ENCODE measurements at regions of chr2 and their contacts with region 1.

Region 1: DNA sequence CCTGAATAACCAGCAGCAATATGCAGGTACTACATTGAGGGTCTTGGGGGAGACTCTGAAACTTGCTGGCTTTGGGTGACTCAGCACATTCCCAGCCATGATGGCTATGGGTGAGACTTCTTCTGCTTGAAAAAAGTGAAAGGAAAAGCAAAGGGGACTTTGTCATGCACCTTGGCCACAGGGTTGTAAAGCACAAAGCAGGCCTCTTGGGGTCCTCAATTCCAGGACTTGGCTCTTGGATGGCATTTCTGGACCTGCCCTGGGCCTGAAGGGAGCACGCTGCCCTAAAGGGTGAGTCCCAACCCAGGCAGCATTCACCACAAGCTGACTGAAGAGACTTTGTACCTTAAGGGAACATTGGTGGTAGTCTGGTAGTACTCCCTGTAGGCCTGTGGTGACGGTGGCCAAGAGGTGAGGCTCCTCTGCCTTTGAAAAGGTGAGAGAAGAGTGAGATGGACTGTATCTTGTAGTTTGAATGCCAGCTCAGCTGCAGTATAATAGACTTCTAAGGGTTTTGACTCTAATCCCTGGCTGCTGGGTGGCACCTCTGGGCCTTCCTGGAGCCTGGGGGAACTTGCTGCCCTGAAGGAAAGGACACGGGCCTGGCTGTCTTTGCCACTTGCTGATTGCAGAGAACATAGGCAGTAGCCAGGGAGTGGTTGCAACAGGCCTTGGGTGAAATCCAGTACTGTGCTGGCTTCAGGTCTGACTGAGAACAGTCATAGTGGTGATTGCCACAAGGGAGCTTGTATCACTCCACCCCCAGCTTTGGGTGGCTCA is 36.5 kb upstream of the CYTIP start:
- DNase-seq: no peak
- H3K4me3 Mint-ChIP-seq: peak overlapping the region; percentile 68
- H3K27ac Mint-ChIP-seq: peak overlapping the region; percentile 91
- H3K4me1 Mint-ChIP-seq: peaks cover 70% of the 10 kb centered on the region
- H3K27me3 Mint-ChIP-seq: no peaks in the 10 kb centered on the region

Region 2: GRCh38 chr2:157468931-157469708 is 11.3 kb before region 1 on chr2:
- intact Hi-C with region 1: loop called (anchors 1 kb)
- DNase-seq: no peak
- H3K4me3 Mint-ChIP-seq: peak overlapping the region; percentile 69
- H3K27ac Mint-ChIP-seq: peak overlapping the region; percentile 96
- H3K4me1 Mint-ChIP-seq: peaks cover 86% of the 10 kb centered on the region
- H3K27me3 Mint-ChIP-seq: no peaks in the 10 kb centered on the region

Region 3: DNA sequence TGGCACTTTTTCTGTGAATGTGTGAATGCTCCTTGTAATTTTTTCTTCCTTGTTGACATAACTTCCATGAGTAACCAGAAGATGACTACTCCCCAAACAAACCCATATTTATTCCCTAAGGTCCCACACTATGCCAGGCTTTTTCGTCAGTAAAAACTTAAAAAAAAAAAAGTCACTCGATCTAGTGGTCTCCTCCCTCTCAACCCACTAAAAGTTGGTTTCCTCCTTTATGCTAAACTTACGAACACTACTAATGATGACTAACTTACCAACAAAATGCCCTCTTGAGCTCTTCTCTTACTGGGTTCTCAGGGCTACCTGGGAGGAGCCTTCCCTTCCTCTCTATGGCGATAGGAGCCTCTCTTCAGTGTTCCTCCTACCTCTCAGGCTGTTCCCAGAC is 377.5 kb after region 1 on chr2:
- intact Hi-C with region 1: no loop called
- DNase-seq: no peak
- H3K4me3 Mint-ChIP-seq: no peak overlapping the region
- H3K27ac Mint-ChIP-seq: peak overlapping the region; percentile 8
- H3K4me1 Mint-ChIP-seq: peaks cover 24% of the 10 kb centered on the region
- H3K27me3 Mint-ChIP-seq: no peaks in the 10 kb centered on the region

Measured in activated T-helper 2 cell treated with anti-CD3 and anti-CD28 coated beads, Interferon-gamma antibody, Interleukin-2, Interleukin-4, amounts not matched to agents 10 μg/mL and 5 μg/mL and 100 μg/mL, durations not matched to agents 14 hours and 24 hours and 36 hours (primary cell).